OCI-LY7 (cell line): ENCODE measurements at regions of chr11 and their contacts with region 1.

Region 1: GRCh38 chr11:66694732-66695207 is 17.1 kb upstream of the RBM4B start:
- DNase-seq: peak; percentile 88
- H3K4me3 ChIP-seq: no peak overlapping the region
- H3K27ac ChIP-seq: no peak overlapping the region
- H3K4me1 ChIP-seq: peaks cover 6% of the 10 kb centered on the region
- CTCF ChIP-seq: peak; percentile 98

Region 2: DNA sequence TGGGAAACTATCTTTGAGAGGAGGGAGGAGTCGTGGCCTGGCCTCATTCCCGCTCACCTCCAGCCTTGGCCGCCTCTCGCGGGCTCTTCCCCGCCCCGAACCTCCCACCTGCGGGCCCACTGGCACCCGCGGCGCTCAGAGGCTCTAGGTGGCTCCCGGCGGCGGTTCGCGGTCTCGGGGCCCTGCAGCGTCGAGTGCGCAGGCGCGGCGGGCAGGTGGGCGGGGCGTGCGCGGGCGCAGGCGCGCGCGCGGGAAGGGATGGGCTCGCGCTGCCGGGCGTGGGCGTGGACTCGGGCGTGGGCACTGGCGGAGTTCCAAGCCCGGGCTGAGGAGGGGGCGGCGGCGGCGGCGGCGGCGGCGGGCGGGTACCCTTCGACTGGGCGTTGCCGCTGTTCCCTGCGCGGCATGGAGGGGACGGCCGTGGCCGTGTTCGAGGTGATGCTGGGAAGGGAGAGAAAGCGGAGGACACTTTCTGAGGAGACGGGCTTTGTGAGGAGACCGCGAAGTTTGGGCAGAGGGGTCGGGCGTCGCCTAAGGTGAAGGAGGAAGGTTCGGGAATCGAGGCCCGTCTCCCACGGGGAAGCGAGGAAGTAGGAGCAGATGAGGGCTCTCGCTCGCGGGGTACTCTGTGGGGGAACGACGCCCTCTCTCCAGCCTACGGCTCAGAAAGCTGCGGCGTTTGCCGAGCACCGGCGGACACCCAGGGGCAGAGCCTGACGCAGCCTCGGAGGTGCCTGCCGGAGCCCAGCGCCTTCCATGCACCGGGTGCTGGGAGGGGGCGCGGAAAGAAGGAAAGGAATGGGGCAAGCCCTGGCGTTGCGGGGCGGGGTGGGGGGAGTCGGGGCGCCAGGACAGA is 49.9 kb after region 1 on chr11:
- CTCF ChIA-PET with region 1: no interaction called
- POLR2A ChIA-PET with region 1: no interaction called
- intact Hi-C with region 1: loop called (anchors 1 kb)
- DNase-seq: peak; percentile 88
- H3K4me3 ChIP-seq: peak overlapping the region; percentile 86
- H3K27ac ChIP-seq: peak overlapping the region; percentile 62
- H3K4me1 ChIP-seq: peaks cover 36% of the 10 kb centered on the region
- CTCF ChIP-seq: no peak

Region 3: DNA sequence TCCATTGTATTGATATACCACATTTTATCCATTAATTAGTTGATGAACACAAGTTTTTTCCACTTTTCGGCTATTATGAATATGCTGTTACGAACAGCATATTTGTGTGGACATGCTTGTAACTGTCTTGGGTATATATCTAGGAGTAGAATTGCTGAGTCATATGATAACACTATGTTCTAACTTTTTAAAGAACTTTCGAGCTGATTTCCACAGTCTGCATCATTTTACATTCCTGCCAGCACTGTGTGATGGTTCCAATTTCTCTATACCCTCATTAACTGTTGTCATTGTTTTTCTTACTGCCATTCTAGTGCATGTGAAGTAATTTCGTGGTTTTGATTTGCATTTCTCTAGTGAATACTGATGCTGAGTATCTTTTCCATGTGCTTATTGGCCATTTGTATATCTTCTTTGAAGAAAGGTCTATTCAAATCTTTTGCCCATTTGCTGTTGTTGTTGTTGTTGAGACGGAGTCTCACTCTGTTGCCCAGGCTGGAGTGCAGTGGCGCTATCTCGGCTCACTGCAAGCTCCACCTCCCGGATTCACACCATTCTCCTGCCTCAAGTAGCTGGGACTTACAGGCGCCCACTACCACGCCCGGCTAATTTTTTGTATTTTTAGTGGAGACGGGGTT is 141.1 kb after region 1 on chr11:
- CTCF ChIA-PET with region 1: no interaction called
- POLR2A ChIA-PET with region 1: interaction called, 4 read pairs
- intact Hi-C with region 1: loop called (anchors 1 kb)
- DNase-seq: no peak
- H3K4me3 ChIP-seq: no peak overlapping the region
- H3K27ac ChIP-seq: peak overlapping the region; percentile 33
- H3K4me1 ChIP-seq: peaks cover 41% of the 10 kb centered on the region
- CTCF ChIP-seq: no peak

Region 4: GRCh38 chr11:66857927-66858670 is 163.3 kb after region 1 on chr11:
- CTCF ChIA-PET with region 1: no interaction called
- POLR2A ChIA-PET with region 1: no interaction called
- intact Hi-C with region 1: no loop called
- DNase-seq: no peak
- H3K4me3 ChIP-seq: peak overlapping the region; percentile 89
- H3K27ac ChIP-seq: no peak overlapping the region
- H3K4me1 ChIP-seq: peaks cover 36% of the 10 kb centered on the region
- CTCF ChIP-seq: no peak

Region 5: DNA sequence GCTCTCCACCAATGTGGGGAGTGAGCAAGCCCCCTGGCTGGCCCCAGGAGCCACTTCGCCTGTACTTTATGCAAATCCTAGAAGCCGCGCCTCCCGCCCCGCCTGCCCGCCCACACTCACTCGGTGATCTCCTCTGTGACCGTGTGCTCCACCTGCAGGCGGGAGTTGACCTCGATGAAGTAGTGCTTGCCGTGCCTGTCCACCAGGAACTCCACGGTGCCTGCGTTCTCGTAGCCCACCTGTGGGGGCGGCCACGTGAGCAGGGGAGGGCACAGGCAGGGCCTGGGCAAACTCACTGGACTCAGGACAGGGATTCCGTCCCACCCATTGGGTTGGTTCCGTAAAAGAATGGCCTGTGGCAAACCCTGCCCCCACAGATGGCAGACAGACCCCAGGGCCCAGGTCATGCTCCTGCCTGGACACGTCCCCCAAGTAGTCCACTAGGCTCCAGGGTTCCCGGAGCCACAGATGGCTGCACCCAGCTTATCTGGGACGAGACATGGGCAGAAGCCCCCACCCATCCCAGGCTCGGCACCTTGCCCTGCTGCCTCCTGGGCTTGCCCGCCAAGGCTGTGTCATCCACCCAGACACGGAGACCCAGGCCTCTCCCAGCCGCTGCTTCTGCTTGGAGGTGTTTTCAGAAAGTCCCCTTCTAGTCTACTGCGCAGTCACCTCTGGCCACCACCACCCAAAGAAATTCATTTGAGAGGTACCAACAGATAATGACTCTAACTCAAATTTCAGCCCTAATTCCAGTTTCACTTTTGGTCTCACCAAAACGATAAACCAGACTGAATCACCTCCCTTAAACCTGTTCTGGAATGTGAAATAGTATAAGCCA is 174.2 kb after region 1 on chr11:
- CTCF ChIA-PET with region 1: no interaction called
- POLR2A ChIA-PET with region 1: no interaction called
- intact Hi-C with region 1: loop called (anchors 1 kb)
- DNase-seq: peak; percentile 92
- H3K4me3 ChIP-seq: peak overlapping the region; percentile 12
- H3K27ac ChIP-seq: no peak overlapping the region
- H3K4me1 ChIP-seq: peaks cover 53% of the 10 kb centered on the region
- CTCF ChIP-seq: peak; percentile 83

Region 6: DNA sequence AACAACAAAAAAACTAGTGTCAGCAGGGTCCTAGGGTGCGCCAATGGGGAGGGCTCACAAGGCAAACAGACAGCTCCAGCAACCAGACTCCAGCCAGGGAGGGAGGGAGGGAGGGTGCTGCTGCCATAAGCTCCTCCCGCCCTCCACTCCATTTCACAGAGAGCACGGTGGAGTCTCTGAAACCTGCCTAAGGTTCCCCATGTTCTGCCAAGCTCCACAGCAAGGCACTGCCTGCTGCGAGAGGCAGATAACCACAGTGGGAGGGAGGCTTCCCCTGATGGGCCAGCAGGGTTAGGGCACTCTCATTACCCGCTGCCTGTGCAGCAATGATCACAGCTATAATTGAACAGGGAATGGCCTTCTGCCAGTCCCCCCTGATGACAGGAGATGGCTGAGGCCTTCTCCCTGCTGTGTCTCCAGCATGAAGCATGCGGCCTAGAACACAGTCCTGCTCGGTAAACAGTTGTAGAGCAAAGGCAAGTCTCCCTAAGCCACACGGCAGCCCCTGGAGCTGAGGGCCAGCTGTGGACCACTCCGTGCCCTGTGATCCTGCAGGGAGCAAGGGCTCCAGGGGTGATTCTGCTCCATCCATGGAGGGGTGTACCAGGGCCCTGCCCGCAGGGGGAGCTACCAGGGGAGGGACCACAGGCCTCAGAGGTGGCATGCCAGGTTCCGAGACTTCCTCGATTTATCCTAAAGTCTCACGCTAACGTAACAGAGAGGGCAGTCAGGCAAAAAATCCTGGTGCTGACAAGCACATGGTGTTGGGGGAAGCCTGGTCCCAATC is 220.5 kb after region 1 on chr11:
- CTCF ChIA-PET with region 1: no interaction called
- POLR2A ChIA-PET with region 1: no interaction called
- intact Hi-C with region 1: no loop called
- DNase-seq: no peak
- H3K4me3 ChIP-seq: no peak overlapping the region
- H3K27ac ChIP-seq: no peak overlapping the region
- H3K4me1 ChIP-seq: no peaks in the 10 kb centered on the region
- CTCF ChIP-seq: 0 out of 2 replicates have a peak, but pooled peaks have one; percentile 16

Region 7: DNA sequence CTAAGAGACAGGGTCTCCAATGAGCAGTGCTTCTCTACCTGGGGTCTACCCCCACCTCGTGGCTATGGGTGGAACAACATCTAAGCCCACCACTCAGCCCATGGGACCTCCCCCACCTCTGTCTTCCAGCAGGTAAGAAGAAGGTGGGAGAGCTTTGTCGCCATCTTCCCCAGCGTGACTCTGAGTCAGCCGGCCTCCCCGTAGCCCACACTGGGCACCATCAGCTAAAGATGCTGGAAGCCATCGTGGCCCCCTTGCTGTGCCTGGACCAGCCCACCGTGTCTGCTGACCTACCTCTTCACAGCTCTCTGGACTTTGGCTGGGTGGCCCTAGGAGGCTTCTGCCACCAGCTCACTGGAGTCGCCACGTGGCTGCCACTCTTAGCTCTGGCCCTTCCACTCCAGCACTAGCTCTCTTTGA is 281.3 kb after region 1 on chr11:
- CTCF ChIA-PET with region 1: no interaction called
- POLR2A ChIA-PET with region 1: no interaction called
- intact Hi-C with region 1: loop called (anchors 10 kb)
- DNase-seq: peak; percentile 29
- H3K4me3 ChIP-seq: no peak overlapping the region
- H3K27ac ChIP-seq: no peak overlapping the region
- H3K4me1 ChIP-seq: no peaks in the 10 kb centered on the region
- CTCF ChIP-seq: peak; percentile 82